Gastrocnemius medialis (tissue), 4 donors: ENCODE measurements at regions of chr11 and their contacts with region 1.

Region 1: GRCh38 chr11:106076919-106077608 is at the start of gene KBTBD3:
- DNase-seq: peak; percentile 98 to 99
- ATAC-seq: peak; percentile 95 to 96
- H3K4me3 ChIP-seq: peak within 1 kb of the TSS; percentile 87 to 95 (median 89)
- H3K27ac ChIP-seq: peak within 1 kb of the TSS; percentile 95 to 97 (median 96)
- H3K4me1 ChIP-seq: peaks cover 35 to 41% of the 10 kb centered on the region in 2 donors
- H3K27me3 ChIP-seq: no peaks in the 10 kb centered on the region
- CTCF ChIP-seq: peak in 2 of 5 experiments; percentile 16 to 33
- POLR2A ChIP-seq: peak; percentile 87 to 91
- total RNA-seq, gene KBTBD3: 0.92 to 6.2 (median 1.9) TPM

Region 2: DNA sequence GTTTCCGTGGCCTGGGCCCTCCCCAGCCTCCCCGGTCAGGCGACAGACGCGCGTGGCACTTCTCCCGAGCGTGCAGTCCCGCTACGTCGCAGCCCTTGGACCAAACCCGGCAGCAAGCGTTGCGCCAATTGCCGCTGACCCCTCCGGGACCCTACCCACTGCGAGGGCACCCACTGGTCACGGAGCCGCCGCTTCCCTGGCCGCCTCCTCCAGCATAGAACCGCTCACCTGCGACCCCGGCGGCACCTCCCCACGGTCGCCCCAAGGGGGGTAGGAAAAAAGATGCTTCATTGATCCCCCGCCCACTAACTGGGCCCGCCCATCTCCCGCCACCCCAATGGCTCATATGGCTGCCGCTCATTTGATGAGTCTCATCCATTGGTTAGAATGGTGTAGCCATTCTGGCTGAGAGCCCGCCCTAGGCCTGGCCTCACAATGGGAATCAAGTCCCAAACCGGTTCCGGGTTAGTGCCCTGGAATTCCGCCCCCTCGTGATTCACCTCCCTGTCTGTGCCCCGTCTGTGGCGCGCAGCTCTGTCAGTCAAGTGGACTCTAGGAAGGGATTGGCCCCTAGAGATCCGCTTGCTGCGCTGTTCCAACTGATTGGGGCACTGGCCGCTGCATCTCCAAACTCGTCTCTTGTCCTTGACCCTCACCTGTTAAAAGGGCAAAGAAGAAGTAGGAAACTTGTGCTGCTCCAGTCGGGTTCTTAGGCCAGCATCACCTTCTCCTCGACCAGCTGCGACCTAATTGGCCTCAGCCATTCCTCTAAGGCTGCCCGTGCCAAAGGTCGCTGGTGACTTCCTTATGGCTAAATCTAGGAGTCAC is 54.9 kb before region 1 on chr11 and contains the start of gene MSANTD4:
- in situ Hi-C with region 1: loop called in 3 of 4 experiments (anchors 5 to 10 kb)
- intact Hi-C with region 1: loop called (anchors 1 kb)
- DNase-seq: peak; percentile 99 to 100
- ATAC-seq: peak; percentile 91 to 98
- H3K4me3 ChIP-seq: peak within 1 kb of the TSS; percentile 85 to 92 (median 88)
- H3K27ac ChIP-seq: peak within 1 kb of the TSS; percentile 83 to 90 (median 87)
- H3K4me1 ChIP-seq: peaks cover 19 to 28% of the 10 kb centered on the region in 2 donors
- H3K27me3 ChIP-seq: no peaks in the 10 kb centered on the region
- CTCF ChIP-seq: peak in 3 of 5 experiments; percentile 10 to 19 (median 16)
- POLR2A ChIP-seq: peak; percentile 68 to 78
- total RNA-seq, gene MSANTD4: 31.3 to 39.6 (median 34.9) TPM